ENCODE measurements at regions of chr13 and their contacts with region 1.

Region 1: GRCh38 chr13:97221989-97222700 is at the start of gene MBNL2:
- DNase-seq: peak; percentile 97
- H3K4me3 Mint-ChIP-seq: peak within 1 kb of the TSS; percentile 91
- H3K27ac Mint-ChIP-seq: peak within 1 kb of the TSS; percentile 94
- H3K4me1 Mint-ChIP-seq: peaks cover 29% of the 10 kb centered on the region
- H3K27me3 Mint-ChIP-seq: no peaks in the 10 kb centered on the region
- CTCF ChIP-seq: no peak
- total RNA-seq, gene MBNL2: 74.3 and 85.8 TPM in 2 replicates

Region 2: GRCh38 chr13:97130190-97130589 is 92.0 kb before region 1 on chr13:
- CTCF ChIA-PET with region 1: interaction called, 7 read pairs
- POLR2A ChIA-PET with region 1: interaction called, 58 read pairs
- intact Hi-C with region 1: no loop called
- DNase-seq: peak; percentile 28
- H3K4me3 Mint-ChIP-seq: no peak overlapping the region
- H3K27ac Mint-ChIP-seq: no peak overlapping the region
- H3K4me1 Mint-ChIP-seq: peaks cover 19% of the 10 kb centered on the region
- H3K27me3 Mint-ChIP-seq: peaks cover 11% of the 10 kb centered on the region
- CTCF ChIP-seq: no peak

Region 3: GRCh38 chr13:97242755-97243497 is 20.8 kb after region 1 on chr13:
- CTCF ChIA-PET with region 1: interaction called, 18 read pairs
- POLR2A ChIA-PET with region 1: interaction called, 223 read pairs
- intact Hi-C with region 1: no loop called
- DNase-seq: no peak
- H3K4me3 Mint-ChIP-seq: no peak overlapping the region
- H3K27ac Mint-ChIP-seq: peak overlapping the region; percentile 25
- H3K4me1 Mint-ChIP-seq: peaks cover 34% of the 10 kb centered on the region
- H3K27me3 Mint-ChIP-seq: no peaks in the 10 kb centered on the region
- CTCF ChIP-seq: no peak

Region 4: DNA sequence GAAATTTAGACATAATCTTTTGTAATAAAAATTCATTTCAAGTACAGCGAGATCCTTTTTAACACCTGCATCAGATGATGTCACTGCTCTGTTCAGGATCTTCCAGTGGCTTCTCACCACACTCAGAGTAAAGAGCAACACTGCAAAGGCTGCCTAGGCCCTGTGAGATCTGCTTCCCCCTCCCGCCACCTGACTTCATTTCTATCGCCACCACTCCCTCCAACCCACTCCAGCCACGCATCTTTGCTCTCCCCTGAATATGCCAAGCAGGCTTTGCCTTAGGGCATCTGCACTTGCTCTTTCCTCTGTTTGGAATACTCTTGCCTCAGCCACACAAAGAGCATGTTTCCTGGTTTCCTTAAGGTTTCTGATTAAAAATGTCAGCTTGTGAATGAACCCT is 58.3 kb after region 1 on chr13:
- CTCF ChIA-PET with region 1: interaction called, 19 read pairs
- POLR2A ChIA-PET with region 1: interaction called, 268 read pairs
- intact Hi-C with region 1: loop called (anchors 1 kb)
- DNase-seq: peak; percentile 46
- H3K4me3 Mint-ChIP-seq: peak overlapping the region; percentile 16
- H3K27ac Mint-ChIP-seq: peak overlapping the region; percentile 81
- H3K4me1 Mint-ChIP-seq: peaks cover 63% of the 10 kb centered on the region
- H3K27me3 Mint-ChIP-seq: no peaks in the 10 kb centered on the region
- CTCF ChIP-seq: no peak

Region 5: GRCh38 chr13:97344265-97345175 is 122.4 kb after region 1 on chr13:
- CTCF ChIA-PET with region 1: interaction called, 87 read pairs
- POLR2A ChIA-PET with region 1: interaction called, 107 read pairs
- intact Hi-C with region 1: loop called (anchors 1 kb)
- DNase-seq: peak; percentile 83
- H3K4me3 Mint-ChIP-seq: no peak overlapping the region
- H3K27ac Mint-ChIP-seq: no peak overlapping the region
- H3K4me1 Mint-ChIP-seq: no peaks in the 10 kb centered on the region
- H3K27me3 Mint-ChIP-seq: no peaks in the 10 kb centered on the region
- CTCF ChIP-seq: peak; percentile 85

Region 6: GRCh38 chr13:97432917-97433726 is 211.0 kb after region 1 on chr13:
- CTCF ChIA-PET with region 1: no interaction called
- POLR2A ChIA-PET with region 1: interaction called, 139 read pairs
- intact Hi-C with region 1: loop called (anchors 1 kb)
- DNase-seq: peak; percentile 100
- H3K4me3 Mint-ChIP-seq: peak overlapping the region; percentile 85
- H3K27ac Mint-ChIP-seq: peak overlapping the region; percentile 91
- H3K4me1 Mint-ChIP-seq: peaks cover 28% of the 10 kb centered on the region
- H3K27me3 Mint-ChIP-seq: no peaks in the 10 kb centered on the region
- CTCF ChIP-seq: no peak